ENCODE measurements at regions of chr12 and their contacts with region 1.

Region 1: GRCh38 chr12:12091977-12092663 is 21.4 kb downstream of the BCL2L14 start:
- DNase-seq: peak; percentile 14
- ATAC-seq: peak; percentile 72
- H3K4me3 ChIP-seq: peak overlapping the region in 1 of 3 experiments; percentile 40; a peak in 1 of 6 replicates
- H3K27ac ChIP-seq: no peak overlapping the region
- H3K4me1 ChIP-seq: peaks cover 56% of the 10 kb centered on the region
- H3K27me3 ChIP-seq: peaks cover 0 to 3% of the 10 kb centered on the region in 2 experiments; a peak in 1 of 5 replicates
- CTCF ChIP-seq: no peak
- EP300 ChIP-seq: no peak
- POLR2A ChIP-seq: no peak
- RAD21 ChIP-seq: no peak

Region 2: GRCh38 chr12:12081836-12082497 is 10.2 kb before region 1 on chr12:
- CTCF ChIA-PET with region 1: no interaction called
- POLR2A ChIA-PET with region 1: no interaction called
- in situ Hi-C with region 1: no loop called
- intact Hi-C with region 1: no loop called
- DNase-seq: peak; percentile 70
- ATAC-seq: peak; percentile 94
- H3K4me3 ChIP-seq: peak overlapping the region; percentile 30 to 49 (median 38)
- H3K27ac ChIP-seq: peak overlapping the region; percentile 49
- H3K4me1 ChIP-seq: peaks cover 37% of the 10 kb centered on the region
- H3K27me3 ChIP-seq: no peaks in the 10 kb centered on the region; a peak in 2 of 5 replicates
- CTCF ChIP-seq: peak; percentile 78
- EP300 ChIP-seq: no peak
- POLR2A ChIP-seq: no peak
- RAD21 ChIP-seq: peak; percentile 50

Region 3: DNA sequence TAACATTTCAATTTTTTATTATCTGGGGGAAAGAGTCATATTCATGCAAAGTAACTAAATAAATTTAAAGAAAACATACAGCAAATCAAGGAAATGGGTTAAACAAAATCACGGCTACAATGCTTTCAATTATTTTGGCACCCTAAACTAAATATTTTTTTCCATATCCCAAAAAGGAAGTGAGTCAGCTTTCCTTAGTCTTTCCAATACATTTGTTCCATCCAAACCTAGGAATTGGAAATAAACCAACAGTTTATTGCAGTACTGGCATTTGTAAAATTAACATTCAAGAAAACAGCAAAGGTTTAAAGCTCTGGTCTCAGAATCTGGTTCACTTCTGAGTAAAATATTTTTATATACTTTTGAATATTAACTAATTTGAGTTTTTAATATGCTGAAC is 67.9 kb after region 1 on chr12:
- CTCF ChIA-PET with region 1: no interaction called
- POLR2A ChIA-PET with region 1: no interaction called
- in situ Hi-C with region 1: no loop called
- intact Hi-C with region 1: loop called (anchors 10 kb)
- DNase-seq: no peak
- ATAC-seq: no peak
- H3K4me3 ChIP-seq: no peak overlapping the region
- H3K27ac ChIP-seq: no peak overlapping the region
- H3K4me1 ChIP-seq: peaks cover 9% of the 10 kb centered on the region
- H3K27me3 ChIP-seq: no peaks in the 10 kb centered on the region
- CTCF ChIP-seq: no peak
- EP300 ChIP-seq: no peak
- POLR2A ChIP-seq: no peak
- RAD21 ChIP-seq: no peak

Measured in HepG2 (cell line).